Heart right ventricle (tissue), 16 donors: ENCODE measurements at regions of chr3 and their contacts with region 1.

Region 1: GRCh38 chr3:7015683-7016440 is 154.9 kb downstream of the GRM7 start:
- DNase-seq: no peak
- ATAC-seq: no peak
- H3K4me3 ChIP-seq: no peak overlapping the region
- H3K27ac ChIP-seq: no peak overlapping the region
- H3K4me1 ChIP-seq: no peaks in the 10 kb centered on the region
- H3K27me3 ChIP-seq: no peaks in the 10 kb centered on the region
- CTCF ChIP-seq: no peak

Region 2: GRCh38 chr3:7038394-7038793 is 22.5 kb after region 1 on chr3:
- intact Hi-C with region 1: loop called in 1 of 10 experiments (anchors 2 kb)
- DNase-seq: no peak
- ATAC-seq: no peak
- H3K4me3 ChIP-seq: no peak overlapping the region
- H3K27ac ChIP-seq: no peak overlapping the region
- H3K4me1 ChIP-seq: no peaks in the 10 kb centered on the region
- H3K27me3 ChIP-seq: no peaks in the 10 kb centered on the region
- CTCF ChIP-seq: no peak

Region 3: DNA sequence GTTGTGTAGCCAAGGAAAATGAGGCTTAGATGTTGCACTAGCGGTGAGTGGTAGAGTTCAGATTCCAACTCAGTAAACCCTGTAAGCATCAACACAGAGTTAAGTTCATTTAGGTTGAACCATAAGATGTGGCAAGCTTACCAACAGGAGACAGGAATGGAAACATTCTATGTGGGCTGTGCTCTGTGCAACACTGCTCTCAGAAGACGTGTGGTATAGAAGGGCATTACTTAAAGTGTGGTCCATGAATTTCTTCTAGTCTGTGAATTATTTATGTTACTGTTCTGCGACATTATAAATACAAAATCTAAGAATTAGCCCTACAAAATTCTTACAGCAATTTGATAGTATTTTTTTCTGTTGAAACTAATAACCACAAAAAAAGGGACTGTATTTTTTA is 58.4 kb after region 1 on chr3:
- intact Hi-C with region 1: no loop called
- DNase-seq: no peak
- ATAC-seq: no peak
- H3K4me3 ChIP-seq: no peak overlapping the region
- H3K27ac ChIP-seq: no peak overlapping the region
- H3K4me1 ChIP-seq: no peaks in the 10 kb centered on the region
- H3K27me3 ChIP-seq: no peaks in the 10 kb centered on the region
- CTCF ChIP-seq: no peak